Activated T-helper 1 cell treated with anti-CD3 and anti-CD28 coated beads, Interleukin-12 subunit alpha, Interleukin-12 subunit beta, Interleukin-2, Interleukin-4 antibody, amounts not matched to agents 30 ng/mL and 10 ng/mL and 1 ng/mL, durations not matched to agents 14 hours and 24 hours and 36 hours (primary cell): ENCODE measurements at regions of chr19 and their contacts with region 1.

Region 1: GRCh38 chr19:28710278-28710677 is 502.7 kb downstream of the UQCRFS1 start:
- DNase-seq: no peak
- H3K4me3 Mint-ChIP-seq: no peak overlapping the region
- H3K27ac Mint-ChIP-seq: no peak overlapping the region
- H3K4me1 Mint-ChIP-seq: no peaks in the 10 kb centered on the region
- H3K27me3 Mint-ChIP-seq: no peaks in the 10 kb centered on the region

Region 2: GRCh38 chr19:27966390-27966816 is 743.9 kb before region 1 on chr19:
- intact Hi-C with region 1: loop called (anchors 2 kb)
- DNase-seq: no peak
- H3K4me3 Mint-ChIP-seq: no peak overlapping the region
- H3K27ac Mint-ChIP-seq: no peak overlapping the region
- H3K4me1 Mint-ChIP-seq: no peaks in the 10 kb centered on the region
- H3K27me3 Mint-ChIP-seq: peaks cover 10% of the 10 kb centered on the region

Region 3: GRCh38 chr19:28242297-28242927 is 467.9 kb before region 1 on chr19:
- intact Hi-C with region 1: loop called (anchors 1 kb)
- DNase-seq: peak; percentile 26
- H3K4me3 Mint-ChIP-seq: no peak overlapping the region
- H3K27ac Mint-ChIP-seq: no peak overlapping the region
- H3K4me1 Mint-ChIP-seq: peaks cover 6% of the 10 kb centered on the region
- H3K27me3 Mint-ChIP-seq: peaks cover 2% of the 10 kb centered on the region

Region 4: GRCh38 chr19:28466107-28467045 is 243.9 kb before region 1 on chr19:
- intact Hi-C with region 1: loop called (anchors 1 kb)
- DNase-seq: peak; percentile 52
- H3K4me3 Mint-ChIP-seq: no peak overlapping the region
- H3K27ac Mint-ChIP-seq: peak overlapping the region; percentile 68
- H3K4me1 Mint-ChIP-seq: peaks cover 75% of the 10 kb centered on the region
- H3K27me3 Mint-ChIP-seq: no peaks in the 10 kb centered on the region

Region 5: DNA sequence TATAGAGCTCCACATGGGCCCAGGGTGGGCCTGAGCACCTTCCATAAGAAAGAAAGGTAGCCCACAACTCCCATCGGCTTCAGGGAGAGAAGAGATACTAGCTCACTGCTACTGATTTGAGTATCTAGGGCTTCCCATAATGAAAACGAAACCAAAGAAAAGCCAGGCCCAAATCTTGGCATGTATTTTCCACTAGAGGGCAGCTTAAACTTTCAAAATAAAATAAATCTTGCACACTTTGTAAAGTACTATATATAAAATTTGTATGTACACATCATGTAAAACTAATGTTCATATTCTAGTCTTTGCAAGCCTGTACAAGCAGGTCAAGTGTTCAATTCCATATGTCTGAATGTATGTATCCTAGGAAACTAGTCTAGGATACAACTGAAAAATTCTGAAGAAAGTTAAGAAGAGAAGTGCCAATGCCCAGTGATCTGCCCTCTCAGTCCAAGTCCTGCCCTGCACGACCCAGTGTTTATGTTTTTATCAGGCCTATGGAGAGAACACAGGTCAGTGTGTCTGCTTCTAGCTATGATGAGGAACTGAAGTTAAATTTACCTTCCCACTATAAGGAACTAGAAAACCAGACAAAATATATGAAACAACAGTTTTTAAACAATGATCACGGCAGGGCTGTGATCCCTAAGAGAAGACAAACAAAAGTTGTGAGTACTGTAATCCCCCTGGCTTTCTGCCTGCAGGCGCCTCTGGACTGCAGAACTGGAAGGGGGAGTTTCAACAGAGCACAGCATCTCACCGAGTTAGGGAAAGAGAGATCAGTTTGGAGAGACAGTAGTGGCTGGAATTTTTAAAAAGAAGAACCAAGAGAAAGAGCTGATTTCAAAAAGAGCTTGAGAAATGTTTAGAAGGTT is 27.0 kb after region 1 on chr19:
- intact Hi-C with region 1: no loop called
- DNase-seq: no peak
- H3K4me3 Mint-ChIP-seq: no peak overlapping the region
- H3K27ac Mint-ChIP-seq: no peak overlapping the region
- H3K4me1 Mint-ChIP-seq: peaks cover 8% of the 10 kb centered on the region
- H3K27me3 Mint-ChIP-seq: peaks cover 5% of the 10 kb centered on the region

Region 6: DNA sequence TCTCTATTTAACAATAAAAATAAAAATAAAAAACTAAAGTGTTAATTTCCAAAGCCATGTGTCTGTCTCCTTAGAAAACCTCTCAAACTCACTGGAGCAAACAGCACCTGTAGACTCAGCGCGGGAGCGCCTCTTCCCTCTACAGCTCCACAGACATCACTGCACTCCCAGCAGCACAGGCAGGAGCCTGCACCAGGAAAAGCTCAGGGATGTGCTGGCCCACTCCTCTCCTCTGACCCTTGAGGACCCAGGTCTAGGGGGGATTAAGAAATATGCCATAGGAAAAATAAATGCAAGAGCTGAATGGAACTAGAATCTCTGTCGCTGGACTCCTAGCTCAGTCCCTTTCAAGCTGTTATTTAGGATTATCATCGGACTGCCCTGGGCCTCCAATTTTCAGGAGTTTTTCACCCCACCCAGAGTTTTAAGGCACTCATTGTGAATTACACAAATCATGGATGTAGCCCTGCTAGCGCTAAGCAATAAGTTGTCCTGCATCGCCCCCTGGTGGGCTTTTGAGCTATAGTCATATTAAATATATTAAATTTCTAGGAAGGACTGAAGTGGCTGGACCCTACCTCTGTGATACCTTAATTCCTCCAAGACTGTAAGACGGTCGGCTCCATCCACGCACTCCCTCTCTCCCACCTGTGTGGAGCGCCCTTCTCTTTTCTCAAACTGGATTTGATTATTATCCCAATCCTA is 168.7 kb after region 1 on chr19:
- intact Hi-C with region 1: loop called (anchors 1 kb)
- DNase-seq: peak; percentile 38
- H3K4me3 Mint-ChIP-seq: no peak overlapping the region
- H3K27ac Mint-ChIP-seq: no peak overlapping the region
- H3K4me1 Mint-ChIP-seq: no peaks in the 10 kb centered on the region
- H3K27me3 Mint-ChIP-seq: peaks cover 7% of the 10 kb centered on the region